ENCODE measurements at regions of chr1 and their contacts with region 1.

Region 1: GRCh38 chr1:214328770-214329469 is 48.0 kb downstream of the SMYD2 start:
- DNase-seq: peak; percentile 95
- H3K4me3 Mint-ChIP-seq: no peak overlapping the region
- H3K27ac Mint-ChIP-seq: no peak overlapping the region
- H3K4me1 Mint-ChIP-seq: no peaks in the 10 kb centered on the region
- H3K27me3 Mint-ChIP-seq: no peaks in the 10 kb centered on the region
- CTCF ChIP-seq: peak; percentile 100

Region 2: DNA sequence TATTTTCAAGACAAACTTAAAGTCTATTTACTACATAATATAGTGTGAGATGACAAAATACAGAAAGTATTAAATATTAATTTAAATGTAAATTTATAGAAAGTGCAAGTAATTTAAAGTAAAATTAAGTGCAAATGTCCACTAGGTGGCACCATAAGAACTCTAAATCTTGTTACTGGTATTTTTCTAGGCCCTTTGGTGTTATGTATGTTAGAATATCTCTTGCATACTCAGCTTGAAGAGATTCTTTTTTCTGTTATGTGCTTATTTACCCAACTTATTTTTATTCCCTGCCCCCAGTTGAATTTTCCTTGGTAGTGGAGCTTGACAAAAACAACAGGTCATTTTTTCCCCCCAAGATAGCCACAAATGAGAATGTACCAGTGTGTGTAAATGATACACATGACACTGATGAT is 1206.4 kb before region 1 on chr1:
- CTCF ChIA-PET with region 1: interaction called, 22 read pairs
- POLR2A ChIA-PET with region 1: no interaction called
- intact Hi-C with region 1: loop called (anchors 1 kb)
- DNase-seq: peak; percentile 75
- H3K4me3 Mint-ChIP-seq: no peak overlapping the region
- H3K27ac Mint-ChIP-seq: peak overlapping the region; percentile 61
- H3K4me1 Mint-ChIP-seq: peaks cover 26% of the 10 kb centered on the region
- H3K27me3 Mint-ChIP-seq: no peaks in the 10 kb centered on the region
- CTCF ChIP-seq: peak; percentile 74

Region 3: GRCh38 chr1:214224611-214225354 is 104.1 kb before region 1 on chr1:
- CTCF ChIA-PET with region 1: interaction called, 804 read pairs
- POLR2A ChIA-PET with region 1: interaction called, 3 read pairs
- intact Hi-C with region 1: no loop called
- DNase-seq: no peak
- H3K4me3 Mint-ChIP-seq: no peak overlapping the region
- H3K27ac Mint-ChIP-seq: no peak overlapping the region
- H3K4me1 Mint-ChIP-seq: peaks cover 4% of the 10 kb centered on the region
- H3K27me3 Mint-ChIP-seq: peaks cover 21% of the 10 kb centered on the region
- CTCF ChIP-seq: no peak

Region 4: DNA sequence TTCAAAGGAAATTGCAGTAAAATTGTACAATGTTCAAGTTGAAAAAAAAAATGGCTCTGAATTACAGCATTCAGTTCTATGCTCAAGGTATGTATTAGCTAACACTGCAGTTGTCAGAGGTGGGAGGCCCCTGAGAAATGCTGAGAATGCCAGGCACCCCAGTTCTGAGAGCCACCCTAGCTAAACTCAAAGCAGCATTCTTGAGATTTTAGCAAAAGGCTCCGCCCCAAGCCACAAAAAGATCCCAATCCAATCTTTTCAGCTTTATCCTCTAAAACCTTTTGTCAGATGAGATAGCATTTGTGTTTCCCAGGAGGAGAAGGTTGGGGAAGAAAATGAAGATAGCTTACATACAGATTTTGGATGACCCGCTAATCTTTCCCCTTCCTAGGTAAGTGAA is 20.9 kb after region 1 on chr1:
- CTCF ChIA-PET with region 1: interaction called, 364 read pairs
- POLR2A ChIA-PET with region 1: no interaction called
- intact Hi-C with region 1: no loop called
- DNase-seq: no peak
- H3K4me3 Mint-ChIP-seq: no peak overlapping the region
- H3K27ac Mint-ChIP-seq: peak overlapping the region; percentile 23
- H3K4me1 Mint-ChIP-seq: no peaks in the 10 kb centered on the region
- H3K27me3 Mint-ChIP-seq: no peaks in the 10 kb centered on the region
- CTCF ChIP-seq: no peak

Region 5: DNA sequence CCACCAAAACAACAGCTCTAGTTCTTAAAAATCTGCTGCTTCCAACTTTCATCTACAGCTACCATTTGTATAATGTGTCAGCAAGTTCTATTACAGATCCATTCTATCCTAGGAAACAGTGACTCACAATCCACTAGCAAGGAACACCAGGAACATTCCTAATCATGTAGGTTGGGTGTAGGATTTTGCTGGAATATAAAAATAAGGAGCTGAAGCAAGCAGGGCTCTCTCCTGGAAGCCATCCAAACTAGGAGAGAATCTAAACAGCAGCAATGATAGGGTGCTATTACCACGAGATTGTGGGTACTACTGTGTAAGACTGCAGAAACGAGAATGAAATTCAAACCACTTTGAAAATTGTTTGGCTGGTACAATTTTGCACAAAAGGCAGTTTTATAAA is 87.5 kb after region 1 on chr1:
- CTCF ChIA-PET with region 1: interaction called, 21 read pairs
- POLR2A ChIA-PET with region 1: no interaction called
- intact Hi-C with region 1: no loop called
- DNase-seq: peak; percentile 80
- H3K4me3 Mint-ChIP-seq: no peak overlapping the region
- H3K27ac Mint-ChIP-seq: peak overlapping the region; percentile 69
- H3K4me1 Mint-ChIP-seq: peaks cover 67% of the 10 kb centered on the region
- H3K27me3 Mint-ChIP-seq: no peaks in the 10 kb centered on the region
- CTCF ChIP-seq: no peak

Region 6: GRCh38 chr1:214566158-214567104 is 237.5 kb after region 1 on chr1:
- CTCF ChIA-PET with region 1: interaction called, 20 read pairs
- POLR2A ChIA-PET with region 1: interaction called, 3 read pairs
- intact Hi-C with region 1: no loop called
- DNase-seq: peak; percentile 85
- H3K4me3 Mint-ChIP-seq: no peak overlapping the region
- H3K27ac Mint-ChIP-seq: peak overlapping the region; percentile 36
- H3K4me1 Mint-ChIP-seq: peaks cover 51% of the 10 kb centered on the region
- H3K27me3 Mint-ChIP-seq: no peaks in the 10 kb centered on the region
- CTCF ChIP-seq: no peak

Region 7: DNA sequence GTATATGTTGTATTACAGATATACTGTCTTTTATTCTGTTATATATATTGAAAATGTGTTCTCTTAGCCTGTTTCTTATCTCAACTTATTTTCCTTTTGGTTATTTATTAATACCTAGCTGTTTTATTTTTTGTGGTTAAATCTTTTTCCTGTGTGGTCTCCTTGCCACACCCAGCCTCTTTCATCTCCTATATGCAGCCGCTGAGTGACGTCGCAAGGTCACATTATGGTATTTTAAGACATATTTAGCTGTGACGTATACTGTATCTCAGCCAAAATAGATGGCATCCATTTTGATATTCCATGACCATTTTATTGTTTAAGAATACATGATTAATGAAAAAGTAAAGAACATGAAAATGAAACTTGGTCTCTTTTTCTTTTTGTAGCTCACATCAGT is 303.2 kb after region 1 on chr1:
- CTCF ChIA-PET with region 1: interaction called, 358 read pairs
- POLR2A ChIA-PET with region 1: interaction called, 7 read pairs
- intact Hi-C with region 1: loop called (anchors 1 kb)
- DNase-seq: no peak
- H3K4me3 Mint-ChIP-seq: no peak overlapping the region
- H3K27ac Mint-ChIP-seq: peak overlapping the region; percentile 66
- H3K4me1 Mint-ChIP-seq: peaks cover 4% of the 10 kb centered on the region
- H3K27me3 Mint-ChIP-seq: no peaks in the 10 kb centered on the region
- CTCF ChIP-seq: no peak

Region 8: GRCh38 chr1:215290018-215290417 is 961.1 kb after region 1 on chr1:
- CTCF ChIA-PET with region 1: no interaction called
- POLR2A ChIA-PET with region 1: no interaction called
- intact Hi-C with region 1: no loop called
- DNase-seq: peak; percentile 16
- H3K4me3 Mint-ChIP-seq: no peak overlapping the region
- H3K27ac Mint-ChIP-seq: no peak overlapping the region
- H3K4me1 Mint-ChIP-seq: peaks cover 8% of the 10 kb centered on the region
- H3K27me3 Mint-ChIP-seq: no peaks in the 10 kb centered on the region
- CTCF ChIP-seq: no peak